ENCODE measurements at regions of chr22 and their contacts with region 1.

Region 1: DNA sequence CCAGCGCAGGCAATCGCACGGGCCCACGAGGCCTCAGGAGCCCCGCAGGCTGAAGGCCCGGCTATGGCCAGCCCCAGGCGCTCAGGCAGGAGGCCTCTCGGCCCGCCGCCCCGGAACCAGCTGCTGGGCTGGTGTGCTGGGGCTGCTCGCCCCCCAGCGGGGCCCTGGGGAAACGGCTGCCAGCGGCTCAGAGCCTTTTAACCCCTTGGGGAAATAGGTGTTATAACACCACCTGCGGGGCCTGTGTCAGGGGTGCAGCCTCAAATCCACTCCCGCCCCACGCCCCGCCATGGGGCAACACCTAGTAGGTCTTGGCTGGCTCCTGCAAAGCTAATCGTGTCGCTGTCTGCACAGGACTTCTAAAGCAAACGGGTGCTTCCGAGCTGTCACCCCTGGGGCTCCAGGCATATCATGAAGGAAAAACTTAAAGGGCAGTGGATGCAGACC is 237.4 kb downstream of the TTC28 start:
- DNase-seq: peak; percentile 69
- ATAC-seq: peak; percentile 87
- H3K4me3 ChIP-seq: peak overlapping the region; percentile 45
- H3K27ac ChIP-seq: peak overlapping the region; percentile 75
- H3K4me1 ChIP-seq: peaks cover 5% of the 10 kb centered on the region; the same call in 1 of the 2 replicates
- H3K27me3 ChIP-seq: no peaks in the 10 kb centered on the region
- CTCF ChIP-seq: peak; percentile 84
- POLR2A ChIP-seq: 0 out of 2 replicates have a peak, but pooled peaks have one; percentile 38
- RAD21 ChIP-seq: peak; percentile 89

Region 2: GRCh38 chr22:28051787-28052356 is 390.4 kb before region 1 on chr22:
- CTCF ChIA-PET with region 1: interaction called, 6 read pairs
- POLR2A ChIA-PET with region 1: no interaction called
- dilution Hi-C with region 1: no loop called
- in situ Hi-C with region 1: loop called (anchors 25 kb)
- intact Hi-C with region 1: loop called (anchors 1 kb)
- DNase-seq: peak; percentile 61
- ATAC-seq: peak; percentile 79; the same call in 1 of the 2 replicates
- H3K4me3 ChIP-seq: no peak overlapping the region
- H3K27ac ChIP-seq: no peak overlapping the region
- H3K4me1 ChIP-seq: peaks cover 3% of the 10 kb centered on the region; the same call in 1 of the 2 replicates
- H3K27me3 ChIP-seq: no peaks in the 10 kb centered on the region
- CTCF ChIP-seq: peak; percentile 90
- POLR2A ChIP-seq: 0 out of 2 replicates have a peak, but pooled peaks have one; percentile 23
- RAD21 ChIP-seq: peak; percentile 92

Region 3: DNA sequence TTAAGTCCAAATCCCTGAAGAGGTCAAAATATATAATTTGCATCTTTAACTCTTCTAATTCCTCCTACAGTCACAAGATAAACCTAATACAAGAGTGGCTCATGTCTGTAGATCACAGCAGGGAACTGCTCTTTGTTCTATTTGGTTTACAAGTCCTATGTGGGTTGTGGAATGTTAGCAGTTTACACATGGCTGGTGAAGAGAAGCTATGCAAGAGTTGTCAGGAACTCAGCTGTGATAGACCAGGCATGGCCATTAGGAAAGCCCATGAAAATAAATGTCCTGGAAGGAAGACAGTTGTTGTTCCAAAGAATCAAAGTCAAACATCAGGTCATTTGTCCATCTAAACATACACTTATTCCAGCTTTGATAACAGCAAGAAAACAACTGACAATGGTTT is 210.8 kb before region 1 on chr22:
- CTCF ChIA-PET with region 1: no interaction called
- POLR2A ChIA-PET with region 1: no interaction called
- dilution Hi-C with region 1: no loop called
- in situ Hi-C with region 1: no loop called
- intact Hi-C with region 1: loop called (anchors 2 kb)
- DNase-seq: peak; percentile 52
- ATAC-seq: peak; percentile 82
- H3K4me3 ChIP-seq: no peak overlapping the region
- H3K27ac ChIP-seq: peak overlapping the region; percentile 52; the same call in 1 of the 2 replicates
- H3K4me1 ChIP-seq: peaks cover 11% of the 10 kb centered on the region
- H3K27me3 ChIP-seq: no peaks in the 10 kb centered on the region
- CTCF ChIP-seq: no peak
- POLR2A ChIP-seq: no peak
- RAD21 ChIP-seq: no peak

Region 4: DNA sequence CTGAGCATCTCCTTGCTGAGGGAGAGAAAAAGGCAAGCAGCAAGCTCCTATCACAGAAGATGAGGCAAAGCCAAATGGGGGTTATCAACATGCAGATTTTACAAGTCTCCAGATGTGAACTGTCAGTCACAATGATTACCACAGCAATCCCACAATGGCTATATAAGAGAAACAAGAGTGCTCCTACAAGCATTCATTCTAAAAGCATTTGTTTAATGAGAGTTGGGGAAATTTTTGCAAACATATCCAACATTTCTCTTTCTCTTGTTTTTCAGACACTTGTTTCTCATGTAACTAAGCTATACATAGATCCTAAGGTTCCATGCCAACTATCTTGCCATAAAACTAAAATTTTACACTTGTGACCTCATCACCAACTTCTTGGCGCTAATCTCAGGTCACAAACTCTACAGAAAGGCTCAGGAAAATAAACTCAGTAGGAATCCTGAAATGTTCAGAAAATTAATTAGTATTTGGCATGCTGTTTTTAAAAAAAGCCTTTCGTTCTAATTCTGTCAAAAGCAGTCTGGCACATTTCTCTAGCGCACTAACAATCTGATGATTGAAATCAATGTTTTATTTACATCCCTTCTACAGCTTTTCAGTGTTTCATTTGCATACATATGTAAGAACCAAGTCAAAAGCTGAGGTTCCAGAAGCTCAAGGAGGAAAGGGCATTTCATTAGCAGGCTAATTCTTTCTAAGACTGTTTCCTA is 37.9 kb after region 1 on chr22:
- CTCF ChIA-PET with region 1: no interaction called
- POLR2A ChIA-PET with region 1: interaction called, 14 read pairs
- dilution Hi-C with region 1: no loop called
- in situ Hi-C with region 1: no loop called
- intact Hi-C with region 1: no loop called
- DNase-seq: peak; percentile 27
- ATAC-seq: peak; percentile 24; the same call in 1 of the 2 replicates
- H3K4me3 ChIP-seq: no peak overlapping the region
- H3K27ac ChIP-seq: no peak overlapping the region
- H3K4me1 ChIP-seq: peaks cover 3% of the 10 kb centered on the region; the same call in 1 of the 2 replicates
- H3K27me3 ChIP-seq: no peaks in the 10 kb centered on the region
- CTCF ChIP-seq: no peak
- POLR2A ChIP-seq: no peak
- RAD21 ChIP-seq: no peak

Region 5: DNA sequence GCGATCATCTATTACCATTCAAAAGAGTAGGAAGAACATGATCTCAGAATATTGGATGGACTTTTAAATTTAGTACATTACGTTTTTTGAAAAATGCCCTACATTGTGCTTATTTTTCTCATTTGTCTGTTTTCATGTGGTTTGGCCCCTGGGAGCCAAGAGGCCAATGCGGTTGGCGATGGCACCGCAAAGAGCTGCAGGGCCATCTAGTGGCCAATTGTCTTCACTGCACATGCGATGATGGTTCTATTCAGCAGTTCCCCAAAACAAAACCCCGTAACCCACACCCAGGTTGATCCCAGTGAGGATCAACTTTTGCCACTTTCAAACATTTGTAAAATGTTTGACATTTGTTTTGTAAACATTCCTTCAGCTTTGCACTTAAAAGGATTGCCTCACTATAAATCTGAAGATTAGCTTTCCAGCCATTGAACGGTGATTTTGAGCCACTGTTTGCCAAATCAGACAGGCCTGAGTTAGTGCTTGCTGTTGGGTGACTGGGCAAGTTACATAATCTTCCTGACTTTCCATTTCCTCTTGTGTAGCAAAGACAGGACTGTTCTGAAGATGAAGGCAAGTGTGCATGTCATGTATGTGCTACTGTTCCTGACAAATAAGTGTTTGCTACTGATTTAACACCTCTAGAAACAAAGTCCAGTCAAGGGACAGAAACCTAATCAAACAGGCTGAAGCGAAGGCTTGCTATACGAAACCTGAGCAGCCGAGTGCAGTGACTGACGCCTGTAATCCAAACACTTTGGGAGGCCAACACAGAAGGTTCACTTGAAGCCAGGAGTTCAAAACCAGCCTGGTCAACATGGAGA is 387.3 kb after region 1 on chr22:
- CTCF ChIA-PET with region 1: no interaction called
- POLR2A ChIA-PET with region 1: no interaction called
- dilution Hi-C with region 1: no loop called
- in situ Hi-C with region 1: no loop called
- intact Hi-C with region 1: loop called (anchors 2 kb)
- DNase-seq: peak; percentile 73
- ATAC-seq: peak; percentile 97
- H3K4me3 ChIP-seq: no peak overlapping the region
- H3K27ac ChIP-seq: no peak overlapping the region
- H3K4me1 ChIP-seq: no peaks in the 10 kb centered on the region
- H3K27me3 ChIP-seq: no peaks in the 10 kb centered on the region
- CTCF ChIP-seq: peak; percentile 97
- POLR2A ChIP-seq: no peak; the same call in 1 of the 2 replicates
- RAD21 ChIP-seq: peak; percentile 94